Dorsolateral prefrontal cortex (tissue), 120 donors: ENCODE measurements at regions of chr7 and their contacts with region 1.

Region 1: GRCh38 chr7:31633894-31634494 is 53.0 kb upstream of the PPP1R17 start:
- DNase-seq: peak in 9 of 10 donors; percentile 29 to 71 (median 57)
- H3K4me3 ChIP-seq: no peak overlapping the region
- H3K27ac ChIP-seq: no peak overlapping the region
- H3K27me3 ChIP-seq: no peaks in the 10 kb centered on the region
- CTCF ChIP-seq: peak; percentile 44 to 94 (median 78)

Region 2: DNA sequence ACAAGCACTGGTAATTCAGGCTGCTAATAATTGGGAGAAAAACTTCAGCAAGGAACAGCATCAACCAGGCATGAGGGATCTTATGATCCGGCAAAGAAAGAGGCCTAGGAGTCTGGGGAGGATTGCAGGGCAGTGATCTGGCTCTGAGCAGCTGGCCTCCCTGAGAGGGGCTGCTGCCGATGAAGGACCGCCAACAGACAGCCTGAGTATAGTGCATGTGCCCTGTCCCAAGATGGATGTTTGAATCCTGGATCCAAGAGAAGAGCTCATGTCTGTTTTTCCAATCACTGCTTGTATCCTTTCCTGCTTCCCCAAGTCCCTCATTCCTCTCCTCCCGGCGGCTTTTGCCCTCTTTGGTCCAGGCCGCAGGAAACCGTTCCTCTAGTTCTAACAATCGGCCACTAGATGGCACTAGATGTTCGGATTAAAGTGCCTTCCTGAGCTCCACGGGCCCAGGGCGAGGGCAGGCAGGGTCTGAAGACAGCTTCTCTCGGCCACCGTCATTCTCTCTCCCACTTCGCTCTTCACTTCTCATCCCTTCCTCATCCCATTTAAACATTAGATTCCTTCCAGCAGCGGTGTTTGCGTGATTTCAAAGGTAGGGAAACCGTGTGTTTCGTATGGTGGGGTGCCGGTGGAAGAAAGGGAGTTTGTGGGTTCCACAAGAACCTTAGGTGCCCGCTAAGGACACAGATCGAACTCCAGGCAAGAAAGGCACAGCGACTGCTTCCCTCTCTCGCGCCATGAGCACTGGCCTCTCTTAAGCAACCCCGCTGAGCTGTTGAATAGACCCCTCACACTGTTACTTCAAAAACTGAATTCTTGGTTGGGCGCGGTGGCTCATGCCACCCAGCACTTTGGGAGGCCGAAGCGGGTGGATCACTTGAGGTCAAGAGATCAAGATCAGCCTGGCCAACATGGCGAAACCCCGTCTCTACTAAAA is 499.5 kb before region 1 on chr7:
- intact Hi-C with region 1: loop called (anchors 2 to 5 kb)
- DNase-seq: peak; percentile 37 to 80 (median 62)
- H3K4me3 ChIP-seq: peak overlapping the region in 9 of 59 donors; percentile 0 to 41 (median 28)
- H3K27ac ChIP-seq: no peak overlapping the region
- H3K27me3 ChIP-seq: peaks cover 0 to 4% (median 0%) of the 10 kb centered on the region in 45 donors
- CTCF ChIP-seq: peak; percentile 52 to 89 (median 78)

Region 3: DNA sequence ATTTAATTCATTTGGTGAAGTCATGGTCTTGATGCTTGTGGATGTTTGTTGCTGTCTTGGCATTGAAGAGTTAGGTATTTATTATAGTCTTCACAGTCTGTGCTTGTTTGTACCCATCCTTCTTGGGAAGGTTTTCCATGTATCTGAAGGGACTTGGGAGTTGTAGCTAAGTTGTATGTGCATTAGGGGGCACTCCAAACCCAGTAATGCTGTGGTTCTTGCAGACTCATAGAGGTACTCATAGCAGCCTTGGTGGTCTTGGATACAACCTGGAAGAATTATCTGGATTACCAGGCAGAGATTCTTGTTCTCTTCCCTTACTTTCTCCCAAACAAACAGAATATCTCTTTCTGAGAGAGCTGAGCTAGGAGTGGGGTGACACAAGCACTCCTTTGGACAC is 488.7 kb before region 1 on chr7:
- intact Hi-C with region 1: no loop called
- DNase-seq: no peak
- H3K4me3 ChIP-seq: no peak overlapping the region
- H3K27ac ChIP-seq: no peak overlapping the region
- H3K27me3 ChIP-seq: peaks cover 0 to 22% (median 0%) of the 10 kb centered on the region in 45 donors
- CTCF ChIP-seq: no peak

Region 4: DNA sequence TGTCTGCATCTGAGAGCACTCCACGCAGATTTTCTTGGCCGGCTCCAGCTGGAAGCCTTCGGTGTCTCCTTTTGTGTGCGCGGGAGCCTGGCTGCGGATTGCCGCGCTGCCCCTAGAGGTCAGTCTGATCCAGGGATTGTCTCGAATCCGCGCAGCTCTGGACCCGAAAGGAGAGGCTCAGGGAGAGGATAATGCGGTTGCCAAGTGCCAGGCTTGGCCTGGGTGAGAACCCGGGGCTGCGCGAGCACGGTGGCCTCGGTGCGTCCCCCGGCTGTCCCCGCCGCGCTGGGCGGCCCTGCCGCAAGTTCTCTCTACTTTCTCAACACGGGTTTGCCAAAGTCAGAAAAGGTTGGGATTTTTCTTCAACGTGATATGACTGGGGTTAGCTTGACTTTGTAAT is 441.0 kb before region 1 on chr7:
- intact Hi-C with region 1: loop called (anchors 10 kb)
- DNase-seq: peak; percentile 52 to 87 (median 79)
- H3K4me3 ChIP-seq: peak overlapping the region in 33 of 59 donors; percentile 2 to 52 (median 34)
- H3K27ac ChIP-seq: peak overlapping the region in 12 of 59 donors; percentile 3 to 52 (median 19)
- H3K27me3 ChIP-seq: peaks cover 0 to 8% (median 0%) of the 10 kb centered on the region in 45 donors
- CTCF ChIP-seq: peak; percentile 38 to 85 (median 76)

Region 5: DNA sequence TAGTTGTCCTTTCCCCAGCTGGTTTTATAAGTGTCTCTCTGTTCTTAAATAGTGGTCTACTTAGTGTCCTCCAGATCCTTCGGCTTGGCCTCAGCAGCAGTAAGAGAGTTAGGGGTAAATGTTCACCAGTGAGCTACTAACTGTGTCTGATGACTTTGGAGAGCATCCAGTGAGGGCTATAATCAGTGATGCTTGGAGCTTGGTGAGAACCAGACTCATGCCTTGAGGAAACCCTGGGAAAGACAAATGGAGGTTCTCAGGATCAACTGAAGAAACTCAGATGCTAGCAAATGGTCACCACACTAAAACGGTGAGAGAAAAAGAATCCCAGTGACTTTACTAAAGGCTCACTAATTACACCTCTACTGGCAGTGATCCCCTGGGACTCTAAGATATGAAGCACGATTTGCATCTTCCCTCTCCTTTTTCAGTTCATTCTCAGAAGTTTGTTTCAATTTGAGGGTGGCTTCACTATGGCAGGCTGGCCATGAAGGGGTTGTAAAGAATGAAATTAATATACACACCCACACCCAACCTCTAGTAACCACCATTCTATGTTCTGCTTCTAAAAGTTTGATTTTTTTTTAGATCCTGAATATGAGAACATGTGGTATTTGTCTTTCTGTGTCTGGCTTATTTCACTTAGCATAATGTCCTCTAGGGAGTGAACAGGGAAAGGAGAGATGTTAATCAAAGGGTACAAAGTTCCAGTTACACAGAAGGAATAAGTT is 258.3 kb after region 1 on chr7:
- intact Hi-C with region 1: no loop called
- DNase-seq: no peak
- H3K4me3 ChIP-seq: no peak overlapping the region
- H3K27ac ChIP-seq: no peak overlapping the region
- H3K27me3 ChIP-seq: no peaks in the 10 kb centered on the region
- CTCF ChIP-seq: no peak